ENCODE measurements at regions of chr2 and their contacts with region 1.

Region 1: DNA sequence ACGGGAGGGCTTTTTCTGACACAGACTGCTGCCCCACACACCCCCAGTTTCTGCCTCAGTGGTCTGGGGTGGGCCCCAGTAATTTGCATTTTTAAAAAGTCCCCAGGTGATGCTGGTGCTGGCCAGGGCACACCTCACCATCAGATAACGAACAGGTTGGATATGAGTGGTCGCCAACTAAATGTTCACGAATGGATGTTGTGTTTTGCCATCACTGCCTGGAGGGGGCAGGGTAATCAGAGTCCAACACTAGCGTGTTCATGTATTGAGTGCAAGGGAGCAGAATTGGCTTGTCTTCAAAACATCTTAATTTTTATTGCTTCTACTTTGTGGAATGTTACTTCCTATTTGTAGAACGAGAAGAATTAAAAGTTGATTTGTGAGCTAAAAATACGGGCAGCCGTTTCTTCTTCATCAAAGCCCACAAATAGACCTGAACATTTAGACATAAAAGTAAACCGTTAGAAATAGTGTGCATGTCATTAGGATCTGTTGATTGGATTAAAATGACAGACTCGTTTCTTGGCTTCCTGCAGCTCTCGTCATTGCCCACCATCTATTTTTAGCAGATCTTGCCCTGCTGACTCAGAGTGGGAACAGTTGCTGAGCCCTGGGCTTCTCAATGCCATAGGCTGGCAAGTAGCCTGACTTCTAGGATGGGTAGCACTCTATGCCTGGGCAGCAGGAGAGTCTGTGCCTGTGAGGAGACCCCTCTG is 45.2 kb downstream of the NCK2 start:
- DNase-seq: peak; percentile 85
- ATAC-seq: peak; percentile 87
- H3K4me3 Mint-ChIP-seq: peak overlapping the region; percentile 73
- H3K27ac Mint-ChIP-seq: peak overlapping the region; percentile 98
- H3K4me1 Mint-ChIP-seq: peaks cover 90% of the 10 kb centered on the region
- H3K27me3 Mint-ChIP-seq: no peaks in the 10 kb centered on the region

Region 2: DNA sequence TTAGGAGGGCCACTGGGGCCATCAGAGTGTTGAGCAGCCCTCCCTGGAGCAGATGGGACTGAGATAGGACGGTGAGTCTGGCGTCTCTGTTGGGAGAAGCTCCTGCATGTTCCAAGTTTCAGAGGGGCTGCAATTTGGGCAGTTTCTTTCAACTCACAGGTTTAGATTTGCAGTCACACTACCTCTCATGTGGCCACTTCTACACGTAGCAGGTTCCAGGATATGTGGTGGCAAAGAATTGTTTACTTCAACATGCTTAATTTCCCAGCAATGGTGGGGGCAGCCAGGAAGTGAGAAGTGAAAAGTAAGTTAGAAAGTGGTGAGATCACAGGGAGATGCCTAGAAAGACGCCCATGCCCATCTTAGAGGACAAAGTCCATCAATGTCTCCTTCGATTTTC is 35.9 kb before region 1 on chr2:
- CTCF ChIA-PET with region 1: interaction called, 4 read pairs
- POLR2A ChIA-PET with region 1: interaction called, 11 read pairs
- DNase-seq: peak; percentile 71
- ATAC-seq: peak; percentile 59
- H3K4me3 Mint-ChIP-seq: peak overlapping the region; percentile 35
- H3K27ac Mint-ChIP-seq: peak overlapping the region; percentile 88
- H3K4me1 Mint-ChIP-seq: peaks cover 91% of the 10 kb centered on the region
- H3K27me3 Mint-ChIP-seq: no peaks in the 10 kb centered on the region

Region 3: DNA sequence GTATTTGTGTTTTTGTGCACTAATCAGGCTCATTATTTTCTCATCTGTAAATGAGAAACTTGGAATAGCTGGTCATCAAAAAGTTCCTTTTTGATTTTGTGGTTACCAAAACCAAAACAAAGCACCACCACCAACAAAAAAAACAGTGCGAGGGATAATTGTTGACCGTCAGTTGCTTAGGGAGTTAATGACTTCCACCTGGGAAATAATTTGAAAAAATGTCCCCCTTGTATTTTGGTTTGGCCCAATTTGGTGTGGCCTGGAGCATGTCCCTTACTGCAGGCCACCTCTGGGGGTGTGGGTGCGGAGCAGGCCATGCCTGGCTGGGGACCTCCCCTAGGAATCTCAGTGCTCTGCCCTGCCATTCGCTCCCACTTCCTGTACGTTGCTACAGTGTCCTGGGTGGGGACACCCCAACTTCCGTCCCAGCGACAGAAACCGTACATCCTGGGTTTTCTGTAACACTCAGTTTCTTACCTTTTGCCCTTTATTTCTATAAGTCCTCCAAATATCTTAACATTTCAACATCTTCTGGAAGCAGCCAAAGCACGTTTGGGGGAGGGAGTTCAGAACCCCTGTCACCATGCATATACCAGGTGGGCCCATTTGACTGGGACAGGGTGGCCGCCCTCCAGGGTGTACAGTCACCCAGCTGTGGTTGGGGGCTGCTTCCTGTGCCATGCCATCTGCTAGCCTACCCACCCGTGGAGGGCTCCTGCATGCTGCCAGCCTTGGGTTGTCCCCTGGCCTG is 13.9 kb before region 1 on chr2:
- CTCF ChIA-PET with region 1: interaction called, 29 read pairs
- POLR2A ChIA-PET with region 1: interaction called, 11 read pairs
- DNase-seq: peak; percentile 58
- ATAC-seq: peak; percentile 76
- H3K4me3 Mint-ChIP-seq: peak overlapping the region; percentile 63
- H3K27ac Mint-ChIP-seq: peak overlapping the region; percentile 85
- H3K4me1 Mint-ChIP-seq: peaks cover 87% of the 10 kb centered on the region
- H3K27me3 Mint-ChIP-seq: no peaks in the 10 kb centered on the region

Region 4: DNA sequence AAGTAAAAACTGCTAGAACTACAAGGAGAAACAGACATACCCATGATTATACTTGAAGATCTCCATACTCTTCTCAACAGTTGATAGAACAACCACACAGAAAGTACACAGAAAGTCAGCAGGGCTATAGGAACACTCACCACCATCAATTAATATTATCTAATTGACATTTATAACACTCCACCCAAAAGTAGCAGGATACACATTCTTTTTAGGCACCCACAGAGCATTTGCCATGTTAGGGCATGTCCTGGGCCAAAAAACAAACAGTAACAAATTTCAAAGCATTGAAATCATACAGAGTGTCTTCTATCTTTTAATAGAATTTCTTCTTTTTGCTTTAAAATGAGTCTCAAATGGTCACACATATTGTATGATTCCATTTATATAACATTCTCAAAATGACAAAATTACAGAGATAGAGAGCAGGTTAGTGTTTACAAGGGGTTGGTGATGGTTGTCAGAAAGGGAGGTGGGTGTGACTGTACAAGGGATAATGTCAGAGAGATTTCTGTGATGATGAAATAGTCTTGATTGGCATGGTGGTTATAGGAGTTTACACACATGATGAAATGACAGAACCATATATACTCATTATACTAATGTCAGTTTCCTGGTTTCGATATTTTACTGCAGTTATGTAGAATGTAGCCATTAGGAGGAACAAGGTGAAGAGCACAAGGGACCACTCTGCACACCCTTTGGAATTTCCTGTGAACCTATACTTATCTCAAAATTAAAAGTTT is 37.6 kb after region 1 on chr2:
- CTCF ChIA-PET with region 1: interaction called, 10 read pairs
- POLR2A ChIA-PET with region 1: no interaction called
- DNase-seq: no peak
- ATAC-seq: no peak
- H3K4me3 Mint-ChIP-seq: no peak overlapping the region
- H3K27ac Mint-ChIP-seq: peak overlapping the region; percentile 41
- H3K4me1 Mint-ChIP-seq: peaks cover 77% of the 10 kb centered on the region
- H3K27me3 Mint-ChIP-seq: no peaks in the 10 kb centered on the region

Measured in activated CD8-positive, alpha-beta T cell treated with anti-CD3 and anti-CD28 coated beads, Interleukin-2, amount 10 ng/mL, durations not matched to agents 7 days and 5 days (primary cell).